Ascending aorta (tissue), 2 donors: ENCODE measurements at regions of chr9 and their contacts with region 1.

Region 1: DNA sequence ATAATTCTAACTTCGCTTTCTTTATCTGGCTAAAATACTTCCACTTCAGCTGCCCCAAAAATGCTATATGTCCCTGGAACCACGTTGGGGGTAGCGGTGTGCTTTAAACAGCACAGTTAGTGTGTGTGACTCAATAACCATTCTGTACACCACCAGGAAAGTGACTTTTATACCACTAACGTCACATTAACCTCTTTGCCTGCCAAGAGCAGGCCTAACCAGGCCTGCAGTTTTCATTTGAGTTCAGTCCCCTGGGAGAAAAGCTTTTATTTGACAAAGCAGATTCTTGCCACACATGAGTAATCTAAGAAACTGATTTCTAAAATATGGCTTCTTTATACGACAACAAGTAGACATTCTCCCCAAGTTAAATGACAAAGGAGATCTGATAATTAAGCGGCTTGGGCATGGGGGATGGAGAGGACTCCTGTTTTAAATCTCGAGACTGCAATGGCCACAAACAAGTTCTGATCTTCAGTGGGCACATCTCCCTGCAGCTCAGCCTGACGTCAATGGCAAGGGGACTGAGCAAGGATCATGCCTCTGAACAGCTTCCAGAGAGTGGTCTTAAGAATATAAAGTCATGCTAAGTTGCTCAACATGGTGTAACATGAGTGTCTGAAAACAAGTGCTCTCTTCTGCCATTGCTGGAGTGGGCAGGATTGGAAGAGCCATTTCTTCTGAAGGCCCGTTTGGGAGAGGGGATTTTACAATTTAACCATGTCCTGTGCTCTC is 91.8 kb downstream of the GLIS3 start:
- DNase-seq: peak in 1 of 2 donors; percentile 78
- H3K4me3 ChIP-seq: no peak overlapping the region
- H3K27ac ChIP-seq: peak overlapping the region; percentile 56 to 65
- H3K4me1 ChIP-seq: peaks cover 12 to 16% of the 10 kb centered on the region in 2 donors
- H3K27me3 ChIP-seq: no peaks in the 10 kb centered on the region
- CTCF ChIP-seq: no peak

Region 2: DNA sequence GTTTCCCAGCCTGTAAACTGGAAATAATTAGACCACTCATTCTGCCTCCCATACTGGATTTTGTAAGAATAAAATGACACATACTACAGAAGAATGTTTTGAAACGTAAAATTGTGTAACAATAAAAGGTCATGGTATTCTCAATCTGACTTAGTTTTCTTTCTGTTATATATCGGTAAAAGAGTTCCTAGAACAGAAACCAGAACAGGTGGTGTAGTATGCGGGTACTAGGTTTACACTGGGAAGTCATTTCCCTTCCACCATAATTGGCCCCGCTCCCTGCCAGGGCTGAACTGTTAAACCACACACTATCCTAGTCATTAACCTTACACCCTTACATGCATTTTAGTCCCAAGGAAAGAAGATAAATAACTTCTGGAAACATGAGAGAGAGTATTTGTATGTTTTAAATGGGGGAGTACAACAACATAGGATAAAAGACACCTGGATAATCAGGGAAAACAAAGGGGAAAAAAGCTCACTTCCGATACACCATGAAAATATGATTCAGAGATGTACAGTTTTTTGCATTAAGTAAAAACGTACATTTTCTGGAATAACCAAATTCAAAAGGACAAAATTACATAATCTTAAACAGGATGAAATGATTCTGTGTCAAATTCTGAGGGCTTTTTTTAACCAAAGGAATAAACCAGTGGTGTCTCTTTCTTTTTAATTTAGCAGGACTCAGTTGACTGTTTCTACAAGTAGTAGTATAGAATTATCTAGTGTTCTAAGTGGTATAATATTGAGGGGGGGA is 107.9 kb before region 1 on chr9:
- intact Hi-C with region 1: loop called (anchors 5 kb)
- DNase-seq: no peak
- H3K4me3 ChIP-seq: no peak overlapping the region
- H3K27ac ChIP-seq: no peak overlapping the region
- H3K4me1 ChIP-seq: peaks cover 11 to 14% of the 10 kb centered on the region in 2 donors
- H3K27me3 ChIP-seq: no peaks in the 10 kb centered on the region
- CTCF ChIP-seq: no peak

Region 3: DNA sequence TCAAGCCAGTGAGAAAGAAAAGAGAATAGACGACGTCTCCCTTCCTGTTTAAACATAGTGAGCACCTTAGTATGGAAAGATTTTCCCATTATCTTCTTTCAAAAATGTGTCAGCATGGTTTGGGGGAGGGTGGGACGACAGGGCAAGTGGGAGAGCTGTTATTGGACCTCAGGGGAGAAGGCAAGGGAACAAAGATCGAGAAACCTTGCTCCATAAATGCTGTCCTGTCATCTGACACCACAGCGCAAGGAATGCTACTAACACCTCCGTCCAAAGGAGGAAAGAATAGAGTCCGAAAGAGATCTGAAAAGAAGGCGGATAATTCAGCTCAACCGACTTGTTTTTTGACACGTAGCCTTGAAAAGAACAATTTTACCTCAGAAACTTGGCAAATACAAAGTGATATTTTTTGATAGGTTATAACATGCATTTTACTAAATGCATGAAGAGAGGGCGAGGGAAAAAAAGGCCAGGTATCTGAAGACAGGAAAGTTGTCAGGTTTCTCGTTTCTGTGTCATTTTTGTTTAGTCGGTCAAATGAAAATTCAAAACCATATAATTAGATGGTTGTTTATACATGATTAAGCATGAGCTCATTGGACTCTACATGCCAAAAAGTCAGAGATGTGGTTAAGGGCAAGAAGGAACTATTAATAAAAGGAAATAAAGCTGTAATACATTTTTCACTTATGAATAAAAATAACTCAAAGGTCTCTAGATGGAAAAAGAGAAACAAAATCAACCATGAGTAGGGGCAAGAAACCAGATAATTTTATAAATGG is 63.9 kb before region 1 on chr9:
- intact Hi-C with region 1: loop called (anchors 5 kb)
- DNase-seq: no peak
- H3K4me3 ChIP-seq: peak overlapping the region; percentile 10 to 49
- H3K27ac ChIP-seq: peak overlapping the region; percentile 75 to 78
- H3K4me1 ChIP-seq: peaks cover 5 to 7% of the 10 kb centered on the region in 2 donors
- H3K27me3 ChIP-seq: no peaks in the 10 kb centered on the region
- CTCF ChIP-seq: no peak